CD14-positive monocyte (primary cell): ENCODE measurements at regions of chr10 and their contacts with region 1.

Region 1: GRCh38 chr10:132396495-132397035 is 435 bp upstream of the PWWP2B start:
- DNase-seq: peak in 2 of 3 donors; percentile 62 to 67
- H3K4me3 ChIP-seq: peak overlapping the region; percentile 38 to 76 (median 55)
- H3K4me3 Mint-ChIP-seq: no peak overlapping the region
- H3K27ac ChIP-seq: peak overlapping the region; percentile 56 to 76
- H3K27ac Mint-ChIP-seq: peak overlapping the region in 1 of 7 donors; percentile 36
- H3K4me1 ChIP-seq: peaks cover 61 to 74% of the 10 kb centered on the region in 2 donors
- H3K4me1 Mint-ChIP-seq: peaks cover 58% of the 10 kb centered on the region
- H3K27me3 ChIP-seq: no peaks in the 10 kb centered on the region
- H3K27me3 Mint-ChIP-seq: peaks cover 5 to 10% (median 7%) of the 10 kb centered on the region in 3 donors
- CTCF ChIP-seq: peak; percentile 33

Region 2: DNA sequence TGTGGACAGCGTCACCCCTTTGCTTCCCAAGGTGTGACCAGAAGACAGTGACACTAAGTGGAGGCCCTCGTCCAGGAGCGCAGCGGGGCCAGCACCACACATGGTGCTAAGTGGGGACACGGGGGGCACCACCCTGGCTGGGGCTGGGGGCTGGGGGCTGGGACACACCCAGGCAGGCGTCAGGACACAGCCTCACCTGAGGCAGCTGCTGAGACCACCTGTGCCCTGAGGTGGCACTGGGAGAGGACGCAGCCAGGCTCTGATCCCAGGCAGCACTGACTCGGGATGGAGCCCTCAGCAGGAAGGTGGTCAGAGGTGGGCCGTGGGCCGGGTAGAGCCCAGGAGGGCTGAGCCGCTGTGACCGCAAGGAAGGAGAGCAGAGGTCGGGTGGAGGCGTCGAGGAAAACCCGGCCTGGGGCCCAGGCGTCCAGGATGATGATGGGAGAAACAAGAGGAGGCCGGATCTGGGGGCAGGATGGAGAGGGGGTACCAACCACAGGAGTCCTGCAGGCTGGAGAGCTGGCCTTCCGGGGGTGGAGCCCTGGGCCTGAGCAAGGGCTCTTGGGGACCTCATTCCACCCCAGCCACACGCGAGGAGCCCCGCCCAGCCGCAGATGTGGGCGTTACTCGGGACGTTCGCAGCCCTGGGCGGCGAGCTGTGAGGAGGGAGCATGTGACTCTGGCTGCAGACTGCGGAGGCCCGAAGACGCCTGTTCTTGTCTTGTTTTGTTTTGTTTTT is 42.0 kb before region 1 on chr10:
- intact Hi-C with region 1: no loop called
- DNase-seq: no peak
- H3K4me3 ChIP-seq: no peak overlapping the region
- H3K4me3 Mint-ChIP-seq: no peak overlapping the region
- H3K27ac ChIP-seq: no peak overlapping the region
- H3K27ac Mint-ChIP-seq: no peak overlapping the region
- H3K4me1 ChIP-seq: peaks cover 2 to 8% of the 10 kb centered on the region in 2 donors
- H3K4me1 Mint-ChIP-seq: peaks cover 17% of the 10 kb centered on the region
- H3K27me3 ChIP-seq: no peaks in the 10 kb centered on the region
- H3K27me3 Mint-ChIP-seq: peaks cover 0 to 2% (median 0%) of the 10 kb centered on the region in 3 donors
- CTCF ChIP-seq: no peak

Region 3: DNA sequence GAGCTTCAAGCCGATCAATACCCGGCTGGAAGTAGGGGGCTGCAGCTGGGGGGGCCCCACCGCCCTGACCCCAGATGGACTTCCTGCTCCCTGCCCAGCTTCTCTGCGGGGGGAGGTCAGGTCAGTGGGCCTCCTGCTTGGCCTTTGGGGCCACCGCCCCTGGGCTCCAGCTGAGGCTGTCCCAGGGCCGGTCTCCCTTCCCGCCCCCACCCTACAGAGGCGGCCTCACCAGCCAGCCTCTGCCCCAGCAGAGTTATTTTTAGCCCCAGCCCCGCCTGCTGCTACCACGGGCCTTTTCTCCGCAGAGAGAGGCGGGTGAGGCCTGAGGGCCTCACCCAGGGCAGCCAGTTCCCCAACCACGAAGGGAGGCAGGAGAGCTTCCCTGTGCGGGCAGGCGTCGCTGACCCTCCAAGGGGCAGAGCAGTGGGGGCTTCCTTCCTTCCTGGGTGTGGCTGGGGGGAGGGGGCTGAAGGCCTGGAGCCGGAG is 24.9 kb after region 1 on chr10:
- intact Hi-C with region 1: loop called in 1 of 2 experiments (anchors 2 kb)
- DNase-seq: peak; percentile 65 to 80 (median 71)
- H3K4me3 ChIP-seq: peak overlapping the region; percentile 2 to 70 (median 17)
- H3K4me3 Mint-ChIP-seq: peak overlapping the region; percentile 62 to 70
- H3K27ac ChIP-seq: peak overlapping the region; percentile 91 to 96
- H3K27ac Mint-ChIP-seq: peak overlapping the region; percentile 91 to 99 (median 95)
- H3K4me1 ChIP-seq: peaks cover 74 to 76% of the 10 kb centered on the region in 2 donors
- H3K4me1 Mint-ChIP-seq: peaks cover 63% of the 10 kb centered on the region
- H3K27me3 ChIP-seq: no peaks in the 10 kb centered on the region
- H3K27me3 Mint-ChIP-seq: no peaks in the 10 kb centered on the region
- CTCF ChIP-seq: no peak